ENCODE measurements at regions of chr11 and their contacts with region 1.

Region 1: DNA sequence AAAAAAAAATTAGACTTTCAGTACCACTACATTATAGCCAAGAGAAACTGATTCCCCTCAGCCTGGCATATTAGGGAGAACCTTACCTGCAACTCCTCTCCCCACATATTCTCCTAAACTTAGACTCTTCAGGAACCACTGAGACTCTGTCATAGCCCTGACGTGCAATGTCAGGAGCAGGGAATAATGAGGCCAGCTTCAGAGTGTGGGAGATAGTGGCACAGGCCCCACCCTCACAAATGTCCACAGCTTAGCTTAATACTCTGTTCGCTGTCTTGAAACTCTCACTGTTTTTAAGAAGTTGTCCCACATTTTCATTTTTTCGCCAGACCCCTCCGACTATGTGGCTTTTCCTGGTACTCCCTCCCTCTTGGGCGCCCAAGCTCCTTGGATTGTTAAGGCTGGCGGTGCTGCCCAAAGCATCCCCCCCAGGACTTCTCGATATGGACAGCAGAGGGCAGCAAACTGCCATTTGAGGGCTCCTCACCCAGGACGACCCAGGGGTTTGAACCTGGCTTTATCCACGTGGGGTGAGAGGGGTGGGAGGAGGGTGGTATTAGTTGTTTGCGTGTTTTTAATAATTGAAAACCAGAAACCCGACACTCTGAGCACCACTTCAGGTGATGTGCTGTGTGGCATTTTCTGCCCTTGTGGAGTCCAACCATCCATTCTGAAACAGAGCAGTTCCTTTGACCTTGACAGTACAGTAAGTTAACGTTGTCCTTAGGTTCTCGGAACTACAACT is 45.2 kb upstream of the RASSF10 start:
- DNase-seq: peak; percentile 56
- ATAC-seq: peak; percentile 31
- H3K4me3 ChIP-seq: no peak overlapping the region
- H3K4me3 Mint-ChIP-seq: no peak overlapping the region
- H3K27ac ChIP-seq: no peak overlapping the region
- H3K27ac Mint-ChIP-seq: no peak overlapping the region
- H3K4me1 ChIP-seq: no peaks in the 10 kb centered on the region
- H3K4me1 Mint-ChIP-seq: no peaks in the 10 kb centered on the region
- H3K27me3 ChIP-seq: no peaks in the 10 kb centered on the region
- H3K27me3 Mint-ChIP-seq: peaks cover 19% of the 10 kb centered on the region
- CTCF ChIP-seq: peak; percentile 76

Region 2: DNA sequence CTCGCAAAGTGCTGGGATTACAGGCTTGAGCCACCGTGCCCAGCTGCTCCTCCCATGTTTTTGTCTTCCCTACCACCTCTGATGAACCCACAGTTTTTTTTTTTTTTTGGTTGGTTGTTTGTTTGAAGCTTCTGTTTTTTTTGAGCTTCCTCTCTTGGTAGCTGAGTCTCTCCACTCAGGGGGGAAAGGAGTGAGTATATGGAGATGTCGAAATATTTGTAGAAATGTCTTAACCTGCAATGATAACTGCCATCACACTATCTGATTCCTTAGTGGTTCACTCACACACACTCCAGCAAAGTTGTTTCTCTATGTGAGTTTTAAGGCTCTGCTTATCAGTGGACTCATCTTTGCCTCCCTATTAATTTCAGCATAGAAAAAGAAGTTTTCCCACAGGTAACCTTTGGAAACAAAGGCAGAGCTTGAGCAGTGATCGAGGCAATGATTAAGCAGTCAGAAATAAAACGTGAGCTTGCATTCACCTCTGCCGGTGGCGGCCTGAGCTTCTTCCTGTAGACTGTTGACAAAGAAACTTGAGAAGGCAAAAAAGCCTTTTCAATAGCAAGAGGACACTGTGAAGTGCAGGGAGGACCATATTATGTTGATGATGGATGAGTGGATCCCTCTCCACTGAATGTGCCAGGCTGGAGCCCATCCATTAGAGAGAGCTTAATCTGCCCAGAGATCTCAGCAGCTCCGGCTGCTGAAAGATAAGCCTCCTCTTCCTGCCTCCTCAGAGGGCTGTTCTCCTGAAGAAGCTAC is 16.1 kb after region 1 on chr11:
- CTCF ChIA-PET with region 1: interaction called, 13 read pairs
- POLR2A ChIA-PET with region 1: no interaction called
- intact Hi-C with region 1: no loop called
- DNase-seq: no peak
- ATAC-seq: no peak
- H3K4me3 ChIP-seq: no peak overlapping the region
- H3K4me3 Mint-ChIP-seq: no peak overlapping the region
- H3K27ac ChIP-seq: no peak overlapping the region
- H3K27ac Mint-ChIP-seq: no peak overlapping the region
- H3K4me1 ChIP-seq: no peaks in the 10 kb centered on the region
- H3K4me1 Mint-ChIP-seq: no peaks in the 10 kb centered on the region
- H3K27me3 ChIP-seq: no peaks in the 10 kb centered on the region
- H3K27me3 Mint-ChIP-seq: peaks cover 3% of the 10 kb centered on the region
- CTCF ChIP-seq: no peak

Region 3: DNA sequence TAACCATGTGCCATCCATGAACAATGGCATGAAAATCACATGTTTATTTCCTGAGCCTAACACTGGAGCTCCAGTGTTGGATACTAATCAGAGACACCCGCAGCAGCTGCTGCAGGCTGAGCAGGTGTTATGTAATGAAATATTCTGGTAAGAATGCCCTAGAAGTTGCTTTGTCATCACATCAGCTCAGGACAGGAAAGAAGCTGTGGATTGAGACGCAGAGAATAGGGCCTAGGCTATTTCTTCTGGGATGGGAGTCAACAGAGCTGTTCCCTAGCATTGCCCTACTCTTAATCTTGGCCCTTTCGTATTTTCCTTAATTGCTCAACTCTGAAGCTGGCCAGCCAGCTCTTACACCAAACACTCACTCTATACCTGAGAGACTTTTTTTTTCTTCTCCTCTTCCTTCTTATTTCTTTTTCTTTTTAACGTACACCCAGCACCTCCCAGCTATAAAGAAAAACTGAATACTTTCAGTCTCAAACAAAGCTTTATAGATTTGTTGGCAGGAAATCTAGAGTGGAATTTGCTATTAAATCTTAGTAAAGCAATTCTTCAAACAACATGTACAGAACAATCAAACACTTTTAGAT is 77.1 kb after region 1 on chr11:
- CTCF ChIA-PET with region 1: no interaction called
- POLR2A ChIA-PET with region 1: no interaction called
- intact Hi-C with region 1: no loop called
- DNase-seq: no peak
- ATAC-seq: no peak
- H3K4me3 ChIP-seq: no peak overlapping the region
- H3K4me3 Mint-ChIP-seq: no peak overlapping the region
- H3K27ac ChIP-seq: no peak overlapping the region
- H3K27ac Mint-ChIP-seq: no peak overlapping the region
- H3K4me1 ChIP-seq: no peaks in the 10 kb centered on the region
- H3K4me1 Mint-ChIP-seq: no peaks in the 10 kb centered on the region
- H3K27me3 ChIP-seq: no peaks in the 10 kb centered on the region
- H3K27me3 Mint-ChIP-seq: peaks cover 10% of the 10 kb centered on the region
- CTCF ChIP-seq: no peak

Region 4: DNA sequence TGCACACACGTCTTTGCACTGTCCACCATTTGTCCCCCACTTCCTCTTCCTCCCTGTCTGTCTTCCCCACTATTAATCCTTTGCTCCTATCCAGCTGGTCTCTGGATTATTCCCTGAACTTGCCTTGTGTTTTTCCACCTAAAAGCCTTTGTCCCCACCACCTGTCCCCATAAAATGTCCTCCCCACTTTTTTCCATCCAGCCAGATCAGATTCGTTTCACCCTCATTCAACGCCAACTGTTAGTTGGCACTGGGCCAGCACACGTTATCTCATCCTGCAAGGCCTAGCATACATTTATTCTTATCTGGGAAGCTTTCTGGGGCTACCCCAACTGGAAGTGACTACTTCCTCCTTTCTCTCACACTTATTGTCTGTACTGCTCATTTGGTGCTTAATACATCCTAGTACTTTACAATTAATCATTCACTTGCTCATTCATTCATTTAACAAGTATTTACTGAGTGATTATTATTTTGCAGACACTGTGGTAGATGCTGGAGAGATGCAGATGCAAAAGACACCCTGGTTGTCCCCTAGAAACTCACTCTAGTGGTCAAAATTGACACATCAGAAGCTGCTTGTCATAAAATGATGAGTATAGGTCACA is 141.4 kb after region 1 on chr11:
- CTCF ChIA-PET with region 1: no interaction called
- POLR2A ChIA-PET with region 1: no interaction called
- intact Hi-C with region 1: no loop called
- DNase-seq: no peak
- ATAC-seq: no peak
- H3K4me3 ChIP-seq: no peak overlapping the region
- H3K4me3 Mint-ChIP-seq: no peak overlapping the region
- H3K27ac ChIP-seq: no peak overlapping the region
- H3K27ac Mint-ChIP-seq: no peak overlapping the region
- H3K4me1 ChIP-seq: no peaks in the 10 kb centered on the region
- H3K4me1 Mint-ChIP-seq: no peaks in the 10 kb centered on the region
- H3K27me3 ChIP-seq: no peaks in the 10 kb centered on the region
- H3K27me3 Mint-ChIP-seq: peaks cover 12% of the 10 kb centered on the region
- CTCF ChIP-seq: no peak

Region 5: DNA sequence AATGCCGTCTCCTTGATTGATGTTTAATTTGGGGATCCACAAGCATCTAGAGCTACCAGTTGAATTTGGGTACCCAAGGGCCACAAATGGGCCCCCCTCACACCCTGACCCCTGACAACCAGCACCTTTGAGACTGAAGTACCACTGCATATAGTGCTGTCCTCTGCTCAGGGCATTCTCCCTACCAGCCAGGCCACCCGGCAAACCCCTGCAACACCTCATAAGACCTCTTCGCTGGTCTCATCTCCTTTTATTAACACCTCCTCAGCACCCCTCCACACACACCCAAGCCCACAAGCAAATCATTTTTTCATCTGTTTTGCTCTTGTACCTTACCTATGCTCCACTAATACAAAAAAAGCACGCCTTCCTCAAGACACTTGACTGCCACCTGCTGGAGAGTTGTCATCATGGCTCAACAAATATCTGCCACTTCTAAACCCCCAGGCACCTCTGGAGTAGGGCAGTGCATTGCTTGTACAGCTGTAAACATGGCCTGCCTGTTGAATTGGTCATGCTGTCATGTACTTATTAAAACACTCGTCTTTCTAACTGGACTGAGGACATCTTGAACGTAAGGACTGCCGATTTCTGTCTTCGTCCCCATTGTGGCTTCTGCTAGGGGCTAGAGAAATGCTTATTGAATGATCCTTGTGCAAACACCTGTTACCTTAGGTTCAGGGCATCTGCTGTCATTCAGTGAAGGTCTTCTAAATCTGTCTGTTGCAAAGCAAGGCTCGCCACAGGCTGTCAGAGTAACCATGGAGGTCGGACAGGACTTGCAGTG is 380.2 kb after region 1 on chr11:
- CTCF ChIA-PET with region 1: interaction called, 25 read pairs
- POLR2A ChIA-PET with region 1: no interaction called
- intact Hi-C with region 1: loop called (anchors 1 kb)
- DNase-seq: peak; percentile 72
- ATAC-seq: peak; percentile 63
- H3K4me3 ChIP-seq: no peak overlapping the region
- H3K4me3 Mint-ChIP-seq: no peak overlapping the region
- H3K27ac ChIP-seq: no peak overlapping the region
- H3K27ac Mint-ChIP-seq: no peak overlapping the region
- H3K4me1 ChIP-seq: peaks cover 7 to 14% of the 10 kb centered on the region in 2 donors
- H3K4me1 Mint-ChIP-seq: peaks cover 49% of the 10 kb centered on the region
- H3K27me3 ChIP-seq: no peaks in the 10 kb centered on the region
- H3K27me3 Mint-ChIP-seq: no peaks in the 10 kb centered on the region
- CTCF ChIP-seq: peak; percentile 89

Region 6: GRCh38 chr11:13384908-13385640 is 421.1 kb after region 1 on chr11:
- CTCF ChIA-PET with region 1: interaction called, 12 read pairs
- POLR2A ChIA-PET with region 1: no interaction called
- intact Hi-C with region 1: no loop called
- DNase-seq: peak; percentile 38
- ATAC-seq: no peak
- H3K4me3 ChIP-seq: no peak overlapping the region
- H3K4me3 Mint-ChIP-seq: no peak overlapping the region
- H3K27ac ChIP-seq: no peak overlapping the region
- H3K27ac Mint-ChIP-seq: peak overlapping the region; percentile 38
- H3K4me1 ChIP-seq: no peaks in the 10 kb centered on the region
- H3K4me1 Mint-ChIP-seq: no peaks in the 10 kb centered on the region
- H3K27me3 ChIP-seq: no peaks in the 10 kb centered on the region
- H3K27me3 Mint-ChIP-seq: no peaks in the 10 kb centered on the region
- CTCF ChIP-seq: peak; percentile 68

Measured in B cell (primary cell).